Mammary epithelial cell (primary cell): ENCODE measurements at regions of chr16 and their contacts with region 1.

Region 1: DNA sequence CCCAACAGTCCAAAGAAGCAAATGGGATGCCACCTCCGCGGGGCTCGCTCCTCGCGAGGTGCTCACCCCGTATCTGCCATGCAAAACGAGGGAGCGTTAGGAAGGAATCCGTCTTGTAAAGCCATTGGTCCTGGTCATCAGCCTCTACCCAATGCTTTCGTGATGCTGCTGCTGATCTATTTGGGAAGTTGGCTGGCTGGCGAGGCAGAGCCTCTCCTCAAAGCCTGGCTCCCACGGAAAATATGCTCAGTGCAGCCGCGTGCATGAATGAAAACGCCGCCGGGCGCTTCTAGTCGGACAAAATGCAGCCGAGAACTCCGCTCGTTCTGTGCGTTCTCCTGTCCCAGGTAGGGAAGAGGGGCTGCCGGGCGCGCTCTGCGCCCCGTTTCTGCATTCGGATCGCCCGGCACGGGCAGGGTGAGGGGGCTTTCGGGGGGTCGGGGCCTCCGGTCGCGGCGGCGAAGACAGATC is at the start of gene CDH13:
- DNase-seq: peak; percentile 73
- H3K4me3 ChIP-seq: peak within 1 kb of the TSS; percentile 69 to 83 (median 77)
- H3K27ac ChIP-seq: peak within 1 kb of the TSS; percentile 99
- H3K4me1 ChIP-seq: peaks cover 34% of the 10 kb centered on the region
- H3K27me3 ChIP-seq: no peaks in the 10 kb centered on the region
- CTCF ChIP-seq: no peak
- total RNA-seq, gene CDH13: 141 to 157 TPM

Region 2: DNA sequence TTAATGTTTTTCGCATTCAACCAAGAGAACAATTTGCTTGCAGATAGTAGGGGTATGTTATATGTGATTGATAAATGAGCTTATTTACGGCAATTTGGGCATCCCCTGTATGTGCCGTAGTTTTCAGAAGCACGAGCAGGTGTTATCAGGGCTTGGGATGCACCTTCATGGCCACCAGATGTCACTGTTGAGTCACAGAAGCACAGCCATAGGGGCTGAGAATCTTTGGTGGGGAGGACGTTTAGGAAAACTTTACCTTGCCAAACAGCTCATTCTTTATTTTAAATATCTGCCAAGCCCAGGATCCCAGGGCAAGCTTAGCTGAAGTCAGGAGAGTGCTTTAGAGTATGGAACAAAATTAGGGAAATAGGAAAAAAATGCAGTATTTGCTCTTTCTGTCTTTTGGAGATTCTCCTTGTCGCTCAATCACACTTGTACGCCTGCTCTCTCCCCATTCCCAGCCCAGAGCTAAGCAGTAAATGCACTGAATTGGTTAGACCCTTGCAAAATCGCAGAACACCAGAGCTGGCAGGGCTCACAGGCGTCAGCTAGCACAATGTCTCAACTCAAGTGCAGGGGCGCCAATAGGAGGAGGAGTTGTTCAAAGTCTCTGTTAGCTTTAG is 363.2 kb before region 1 on chr16:
- CTCF ChIA-PET with region 1: no interaction called
- dilution Hi-C with region 1: no loop called
- in situ Hi-C with region 1: no loop called
- intact Hi-C with region 1: loop called (anchors 2 kb)
- DNase-seq: peak; percentile 20
- H3K4me3 ChIP-seq: no peak overlapping the region
- H3K27ac ChIP-seq: no peak overlapping the region
- H3K4me1 ChIP-seq: no peaks in the 10 kb centered on the region
- H3K27me3 ChIP-seq: peaks cover 4% of the 10 kb centered on the region
- CTCF ChIP-seq: peak; percentile 90 to 97

Region 3: DNA sequence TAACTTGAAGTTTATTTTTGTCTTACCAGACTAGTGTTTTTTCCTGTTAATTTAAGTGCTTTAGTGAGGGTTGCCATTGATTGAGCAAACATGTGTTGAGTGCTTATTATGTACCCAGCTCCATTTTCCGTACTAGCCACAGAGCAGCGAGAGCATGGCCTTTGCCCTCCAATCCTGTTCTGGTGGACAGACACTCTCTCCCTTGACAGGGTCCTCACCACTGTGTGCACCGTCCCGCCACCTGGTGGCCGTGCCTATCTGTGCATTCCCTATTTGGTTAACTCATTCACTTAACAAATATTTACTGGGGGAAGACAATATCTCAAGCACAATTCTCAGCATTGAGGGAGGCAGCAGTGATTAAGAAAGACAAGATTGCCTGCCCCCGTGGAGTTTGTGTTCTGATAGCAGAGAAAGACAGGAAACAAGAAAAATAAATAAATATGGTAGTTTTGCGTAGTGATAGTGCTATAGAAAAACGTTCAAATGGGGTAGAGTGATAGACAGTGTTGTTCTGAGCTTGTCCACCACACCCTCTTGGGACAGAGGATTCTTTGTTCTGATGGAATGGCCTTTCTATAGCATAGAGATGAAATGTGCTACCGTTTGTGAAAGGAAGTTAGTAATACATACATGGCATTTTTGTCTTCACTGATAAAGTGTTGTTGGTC is 13.0 kb after region 1 on chr16:
- CTCF ChIA-PET with region 1: no interaction called
- dilution Hi-C with region 1: no loop called
- in situ Hi-C with region 1: no loop called
- intact Hi-C with region 1: loop called (anchors 1 kb)
- DNase-seq: peak; percentile 67
- H3K4me3 ChIP-seq: no peak overlapping the region
- H3K27ac ChIP-seq: peak overlapping the region; percentile 75
- H3K4me1 ChIP-seq: peaks cover 62% of the 10 kb centered on the region
- H3K27me3 ChIP-seq: no peaks in the 10 kb centered on the region
- CTCF ChIP-seq: peak; percentile 86 to 94

Region 4: DNA sequence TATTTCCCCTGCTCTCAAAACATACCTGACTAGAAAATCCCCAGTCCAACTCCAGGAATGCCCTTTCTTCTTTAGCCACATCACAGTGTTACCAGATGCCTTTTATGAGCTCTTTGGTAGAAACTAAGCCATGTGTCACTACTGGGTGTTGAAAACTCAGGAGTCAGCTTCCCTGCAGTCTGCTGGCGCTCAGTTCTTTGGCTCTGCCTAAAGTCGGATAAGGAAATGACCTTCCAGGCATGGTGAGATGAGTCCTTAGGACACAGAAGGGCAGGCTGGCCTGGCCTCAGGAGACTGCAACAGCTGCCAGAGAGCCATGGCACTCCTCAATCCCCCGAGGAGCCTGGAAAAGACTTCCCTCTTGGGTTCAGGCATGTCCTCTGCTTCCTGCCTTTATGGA is 89.0 kb after region 1 on chr16:
- CTCF ChIA-PET with region 1: no interaction called
- dilution Hi-C with region 1: no loop called
- in situ Hi-C with region 1: no loop called
- intact Hi-C with region 1: loop called (anchors 5 kb)
- DNase-seq: peak; percentile 8
- H3K4me3 ChIP-seq: no peak overlapping the region
- H3K27ac ChIP-seq: no peak overlapping the region
- H3K4me1 ChIP-seq: no peaks in the 10 kb centered on the region
- H3K27me3 ChIP-seq: no peaks in the 10 kb centered on the region
- CTCF ChIP-seq: no peak

Region 5: GRCh38 chr16:82867485-82867884 is 240.7 kb after region 1 on chr16:
- CTCF ChIA-PET with region 1: no interaction called
- dilution Hi-C with region 1: no loop called
- in situ Hi-C with region 1: no loop called
- intact Hi-C with region 1: no loop called
- DNase-seq: peak; percentile 23
- H3K4me3 ChIP-seq: no peak overlapping the region
- H3K27ac ChIP-seq: no peak overlapping the region
- H3K4me1 ChIP-seq: no peaks in the 10 kb centered on the region
- H3K27me3 ChIP-seq: no peaks in the 10 kb centered on the region
- CTCF ChIP-seq: no peak

Region 6: GRCh38 chr16:83070416-83071209 is 443.8 kb after region 1 on chr16:
- CTCF ChIA-PET with region 1: no interaction called
- dilution Hi-C with region 1: no loop called
- in situ Hi-C with region 1: no loop called
- intact Hi-C with region 1: loop called (anchors 2 kb)
- DNase-seq: no peak
- H3K4me3 ChIP-seq: no peak overlapping the region
- H3K27ac ChIP-seq: no peak overlapping the region
- H3K4me1 ChIP-seq: no peaks in the 10 kb centered on the region
- H3K27me3 ChIP-seq: no peaks in the 10 kb centered on the region
- CTCF ChIP-seq: no peak

Region 7: GRCh38 chr16:83449861-83450260 is 823.0 kb after region 1 on chr16:
- CTCF ChIA-PET with region 1: no interaction called
- dilution Hi-C with region 1: no loop called
- in situ Hi-C with region 1: loop called in 1 of 2 experiments (anchors 25 kb)
- intact Hi-C with region 1: loop called (anchors 2 kb)
- DNase-seq: no peak
- H3K4me3 ChIP-seq: no peak overlapping the region
- H3K27ac ChIP-seq: no peak overlapping the region
- H3K4me1 ChIP-seq: no peaks in the 10 kb centered on the region
- H3K27me3 ChIP-seq: no peaks in the 10 kb centered on the region
- CTCF ChIP-seq: no peak